Activated CD4-positive, alpha-beta T cell treated with anti-CD3 and anti-CD28 coated beads for 36 hours (primary cell): ENCODE measurements at regions of chr19 and their contacts with region 1.

Region 1: GRCh38 chr19:53394974-53395839 is at the start of gene ZNF765:
- DNase-seq: peak; percentile 98
- ATAC-seq: peak; percentile 99
- H3K4me3 Mint-ChIP-seq: peak within 1 kb of the TSS; percentile 84
- H3K27ac Mint-ChIP-seq: peak within 1 kb of the TSS; percentile 89
- H3K4me1 Mint-ChIP-seq: peaks cover 25% of the 10 kb centered on the region
- H3K27me3 Mint-ChIP-seq: no peaks in the 10 kb centered on the region
- total RNA-seq, gene ZNF765: 10.7 to 10.9 TPM

Region 2: DNA sequence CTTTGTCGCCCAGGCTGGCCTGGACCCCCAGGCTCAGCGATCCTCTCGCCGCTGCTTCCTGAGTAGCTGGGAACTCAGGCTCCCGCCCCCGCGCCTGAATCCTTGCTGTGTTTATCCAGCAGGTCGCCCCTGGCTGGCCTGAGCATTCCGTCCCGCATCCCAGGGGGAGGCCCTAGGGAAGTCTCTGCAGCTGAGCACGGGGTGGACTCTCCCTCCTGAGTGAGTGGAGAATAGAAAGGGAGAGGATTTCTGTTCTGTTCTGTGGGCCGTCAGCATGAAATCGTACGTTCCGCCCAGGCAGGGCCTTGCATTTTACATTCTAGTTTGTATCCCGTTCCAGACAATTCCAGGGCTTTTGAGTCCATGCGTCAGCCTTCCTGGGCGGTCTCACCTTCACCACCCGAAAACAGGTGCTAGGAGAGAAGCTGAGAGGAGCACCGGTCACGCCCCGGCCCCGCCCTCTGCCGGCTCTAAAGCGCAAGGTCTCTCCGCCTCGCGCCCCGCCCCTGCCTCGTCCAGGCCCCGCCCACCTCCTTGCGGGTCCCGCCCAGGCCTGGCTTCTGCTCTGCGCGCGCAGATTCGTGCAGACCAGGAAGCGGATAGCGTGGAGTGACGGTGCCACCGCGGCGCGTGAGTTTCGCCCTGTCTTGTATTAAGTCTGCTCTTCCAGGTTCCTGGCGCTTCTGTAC is 36.3 kb after region 1 on chr19 and contains the start of gene ZNF761:
- CTCF ChIA-PET with region 1: no interaction called
- POLR2A ChIA-PET with region 1: no interaction called
- intact Hi-C with region 1: loop called (anchors 1 kb)
- DNase-seq: peak; percentile 98
- ATAC-seq: peak; percentile 99
- H3K4me3 Mint-ChIP-seq: peak within 1 kb of the TSS; percentile 94
- H3K27ac Mint-ChIP-seq: peak within 1 kb of the TSS; percentile 83
- H3K4me1 Mint-ChIP-seq: peaks cover 26% of the 10 kb centered on the region
- H3K27me3 Mint-ChIP-seq: no peaks in the 10 kb centered on the region
- total RNA-seq, gene ZNF761: 10.5 to 11.4 TPM

Region 3: GRCh38 chr19:53467485-53468262 is 72.5 kb after region 1 on chr19 and contains the start of gene ZNF813:
- CTCF ChIA-PET with region 1: no interaction called
- POLR2A ChIA-PET with region 1: no interaction called
- intact Hi-C with region 1: loop called in 1 of 2 experiments (anchors 1 kb)
- DNase-seq: peak; percentile 98
- ATAC-seq: peak; percentile 98
- H3K4me3 Mint-ChIP-seq: peak within 1 kb of the TSS; percentile 80
- H3K27ac Mint-ChIP-seq: peak within 1 kb of the TSS; percentile 87
- H3K4me1 Mint-ChIP-seq: peaks cover 20% of the 10 kb centered on the region
- H3K27me3 Mint-ChIP-seq: peaks cover 9% of the 10 kb centered on the region
- total RNA-seq, gene ZNF813: 5.8 to 7.4 TPM